Ascending aorta (tissue), 2 donors: ENCODE measurements at regions of chr1 and their contacts with region 1.

Region 1: GRCh38 chr1:115595279-115596079 is 46.3 kb upstream of the VANGL1 start:
- DNase-seq: peak; percentile 12 to 92
- H3K4me3 ChIP-seq: no peak overlapping the region
- H3K27ac ChIP-seq: no peak overlapping the region
- H3K4me1 ChIP-seq: peaks cover 0 to 2% of the 10 kb centered on the region in 2 donors
- H3K27me3 ChIP-seq: no peaks in the 10 kb centered on the region
- CTCF ChIP-seq: peak; percentile 87 to 92 (median 87)

Region 2: DNA sequence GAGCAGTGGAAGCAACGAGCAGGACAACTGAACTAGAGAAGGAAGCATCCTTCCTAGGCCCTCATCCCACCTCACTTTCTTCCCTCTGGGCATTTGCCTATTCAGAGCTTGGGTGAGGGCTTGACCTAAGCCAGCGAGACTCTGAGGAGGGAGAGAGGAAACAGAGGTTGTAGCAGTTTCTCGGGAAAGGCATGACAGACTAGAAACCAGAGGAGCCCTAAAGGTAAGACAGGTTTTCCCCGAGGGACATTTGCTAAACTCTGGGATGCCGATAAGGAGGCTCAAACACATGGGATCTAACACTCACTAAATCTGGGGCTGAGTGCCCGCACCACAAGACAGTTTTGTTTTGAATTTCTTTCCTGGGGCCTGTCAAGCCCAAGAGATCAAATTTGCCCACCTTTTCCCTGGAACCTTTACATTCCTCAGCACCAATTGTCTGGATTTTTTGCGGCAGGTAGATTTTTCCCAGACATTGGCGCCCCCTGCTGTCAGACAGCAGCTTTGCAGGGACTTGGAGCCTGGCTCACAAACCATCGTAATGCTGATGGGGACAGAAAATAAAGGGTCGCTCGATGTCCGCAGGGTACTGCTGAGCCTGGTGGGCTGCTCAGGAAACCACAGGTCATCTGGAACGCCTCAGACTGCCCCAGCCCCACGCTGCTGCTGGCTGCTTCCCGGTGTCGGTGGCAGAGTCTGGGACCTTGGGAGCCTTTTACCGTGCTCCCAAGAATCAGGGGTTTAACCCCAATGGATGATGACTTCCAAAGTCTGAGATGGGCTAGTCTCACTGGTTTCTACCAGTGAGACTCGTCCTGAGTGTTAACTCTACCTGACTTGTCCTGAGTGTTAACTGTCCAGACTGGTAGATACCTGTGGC is 482.7 kb before region 1 on chr1:
- intact Hi-C with region 1: loop called (anchors 5 kb)
- DNase-seq: no peak
- H3K4me3 ChIP-seq: no peak overlapping the region
- H3K27ac ChIP-seq: no peak overlapping the region
- H3K4me1 ChIP-seq: peaks cover 0 to 5% of the 10 kb centered on the region in 2 donors
- H3K27me3 ChIP-seq: no peaks in the 10 kb centered on the region
- CTCF ChIP-seq: peak; percentile 86 to 94 (median 93)

Region 3: GRCh38 chr1:115282807-115283208 is 312.7 kb before region 1 on chr1:
- intact Hi-C with region 1: loop called (anchors 10 kb)
- DNase-seq: peak; percentile 61 to 85
- H3K4me3 ChIP-seq: peak overlapping the region; percentile 4 to 51
- H3K27ac ChIP-seq: peak overlapping the region; percentile 91 to 95
- H3K4me1 ChIP-seq: peaks cover 11 to 31% of the 10 kb centered on the region in 2 donors
- H3K27me3 ChIP-seq: no peaks in the 10 kb centered on the region
- CTCF ChIP-seq: no peak

Region 4: GRCh38 chr1:115545791-115546733 is 49.4 kb before region 1 on chr1:
- intact Hi-C with region 1: loop called (anchors 5 kb)
- DNase-seq: peak in 1 of 2 donors; percentile 73
- H3K4me3 ChIP-seq: no peak overlapping the region
- H3K27ac ChIP-seq: peak overlapping the region; percentile 51 to 62
- H3K4me1 ChIP-seq: peaks cover 0 to 5% of the 10 kb centered on the region in 2 donors
- H3K27me3 ChIP-seq: no peaks in the 10 kb centered on the region
- CTCF ChIP-seq: peak in 2 of 3 experiments; percentile 33 to 62